Activated naive CD4-positive, alpha-beta T cell treated with anti-CD3 and anti-CD28 coated beads for 36 hours (primary cell): ENCODE measurements at regions of chr14 and their contacts with region 1.

Region 1: DNA sequence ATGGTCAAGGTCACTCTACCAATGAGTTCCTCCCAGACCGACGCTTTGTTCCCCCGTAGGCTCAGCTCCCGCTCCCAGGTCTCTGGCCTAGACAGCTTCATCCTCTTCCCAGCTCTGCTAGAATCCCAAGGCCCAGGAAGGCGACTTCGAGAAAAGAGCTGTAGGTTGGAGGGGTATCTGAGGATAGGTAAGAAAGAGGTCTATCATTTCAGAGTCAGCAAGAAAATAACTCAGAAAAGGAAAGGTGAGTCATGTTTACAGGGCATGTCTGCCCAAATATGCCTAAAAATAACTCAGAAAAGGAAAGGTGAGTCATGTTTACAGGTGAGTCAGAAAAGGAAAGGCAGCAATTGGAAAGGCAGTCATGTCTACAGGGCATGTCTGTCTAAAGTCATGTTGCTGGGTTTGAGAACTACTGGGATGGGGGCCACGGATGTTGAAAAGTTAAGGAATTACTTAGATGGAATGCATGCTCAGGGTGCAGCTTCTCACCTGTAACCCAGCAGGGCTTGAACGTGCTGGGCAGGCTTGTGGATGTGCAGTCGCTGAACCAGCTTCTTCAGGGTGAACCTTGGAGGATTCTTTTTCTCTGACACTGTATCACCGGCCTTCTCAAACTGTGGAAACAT is 12.2 kb downstream of the TEP1 start:
- DNase-seq: peak; percentile 43
- H3K4me3 Mint-ChIP-seq: peak overlapping the region; percentile 56
- H3K27ac Mint-ChIP-seq: peak overlapping the region; percentile 98
- H3K4me1 Mint-ChIP-seq: peaks cover 28% of the 10 kb centered on the region
- H3K27me3 Mint-ChIP-seq: no peaks in the 10 kb centered on the region

Region 2: DNA sequence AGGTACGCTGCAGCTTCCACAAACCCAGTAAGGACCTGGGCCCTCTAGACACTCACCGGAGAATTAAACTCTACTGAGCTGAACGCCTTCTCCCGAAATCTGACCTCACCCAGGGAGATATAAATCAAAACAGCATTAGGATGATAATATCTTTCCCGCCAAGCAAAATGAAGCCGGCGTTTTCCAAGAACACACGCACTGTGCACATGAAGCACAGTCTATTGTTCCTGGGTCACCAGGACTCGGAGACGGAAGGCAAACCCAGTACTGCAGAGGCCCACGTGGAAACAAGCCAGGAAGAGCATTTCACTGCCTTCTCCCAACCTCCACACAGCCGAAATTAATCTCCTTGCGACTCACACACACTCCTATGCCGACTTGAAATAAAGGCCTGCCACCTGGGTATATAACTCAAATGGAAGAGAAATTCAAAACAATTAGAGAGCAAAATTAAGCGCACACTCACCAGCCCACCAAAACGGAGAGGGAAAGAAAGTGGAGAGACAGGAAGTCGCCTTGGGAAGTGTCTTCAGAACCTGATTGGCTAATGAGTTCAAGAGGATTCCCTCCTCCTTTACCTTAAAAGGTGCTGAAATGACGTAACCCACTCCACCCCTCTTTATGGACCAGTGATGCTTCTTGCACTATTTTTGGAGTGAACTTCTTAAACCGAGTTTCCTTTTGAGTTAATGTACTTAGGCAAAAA is 68.1 kb before region 1 on chr14 and contains the start of gene CCNB1IP1:
- CTCF ChIA-PET with region 1: interaction called, 12 read pairs
- intact Hi-C with region 1: loop called (anchors 1 kb)
- DNase-seq: peak; percentile 71
- H3K4me3 Mint-ChIP-seq: peak within 1 kb of the TSS; percentile 90
- H3K27ac Mint-ChIP-seq: peak within 1 kb of the TSS; percentile 92
- H3K4me1 Mint-ChIP-seq: peaks cover 38% of the 10 kb centered on the region
- H3K27me3 Mint-ChIP-seq: no peaks in the 10 kb centered on the region
- total RNA-seq, gene CCNB1IP1: 93.4 to 98.6 TPM

Region 3: DNA sequence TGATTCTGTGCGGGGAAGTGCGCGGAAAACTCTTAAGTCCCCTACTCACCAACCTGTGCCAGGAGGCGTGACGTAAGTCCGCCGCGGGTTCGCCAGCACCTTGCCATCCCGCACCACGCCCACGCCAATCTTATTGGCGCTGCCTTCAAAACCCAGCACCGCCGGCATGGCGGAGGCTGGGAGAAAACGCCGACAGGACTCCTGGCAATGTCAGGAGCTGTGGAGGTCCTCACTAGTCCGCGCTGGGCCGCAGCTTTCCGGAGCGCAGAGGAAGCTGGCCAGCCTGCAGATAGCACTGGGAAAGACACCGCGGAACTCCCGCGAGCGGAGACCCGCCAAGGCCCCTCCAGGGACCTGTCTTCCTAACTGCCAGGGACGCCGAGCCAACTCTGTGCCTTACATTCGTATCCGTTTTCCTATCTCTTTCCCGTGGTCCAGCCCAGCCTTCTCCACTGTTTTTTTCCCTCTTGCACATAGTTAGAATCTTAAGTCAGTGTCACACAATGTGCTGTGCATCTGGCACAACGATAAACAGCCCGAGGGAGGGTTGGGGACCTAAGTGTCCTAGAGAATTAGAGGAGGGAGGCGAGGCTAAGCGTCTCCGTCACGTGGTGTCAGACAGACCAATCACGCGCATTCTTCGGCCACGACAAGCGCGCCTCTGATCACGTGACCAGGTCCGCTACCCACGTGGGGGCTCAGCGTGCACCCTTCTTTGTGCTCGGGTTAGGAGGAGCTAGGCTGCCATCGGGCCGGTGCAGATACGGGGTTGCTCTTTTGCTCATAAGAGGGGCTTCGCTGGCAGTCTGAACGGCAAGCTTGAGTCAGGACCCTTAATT is 53.7 kb after region 1 on chr14 and contains the starts of genes APEX1 and OSGEP:
- CTCF ChIA-PET with region 1: interaction called, 3 read pairs
- intact Hi-C with region 1: loop called (anchors 1 kb)
- DNase-seq: peak; percentile 99
- H3K4me3 Mint-ChIP-seq: peak within 1 kb of the TSS; percentile 52
- H3K27ac Mint-ChIP-seq: no peak within 1 kb of the TSS
- H3K4me1 Mint-ChIP-seq: peaks cover 31% of the 10 kb centered on the region
- H3K27me3 Mint-ChIP-seq: no peaks in the 10 kb centered on the region
- total RNA-seq, gene APEX1: 187 to 190 TPM
- total RNA-seq, gene OSGEP: 35.7 to 36.8 TPM

Region 4: GRCh38 chr14:20469242-20469889 is 68.3 kb after region 1 on chr14 and contains the start of gene PNP:
- CTCF ChIA-PET with region 1: no interaction called
- intact Hi-C with region 1: loop called (anchors 2 kb)
- DNase-seq: peak; percentile 91
- H3K4me3 Mint-ChIP-seq: peak within 1 kb of the TSS; percentile 88
- H3K27ac Mint-ChIP-seq: peak within 1 kb of the TSS; percentile 97
- H3K4me1 Mint-ChIP-seq: peaks cover 36% of the 10 kb centered on the region
- H3K27me3 Mint-ChIP-seq: no peaks in the 10 kb centered on the region
- total RNA-seq, gene PNP: 187 to 191 TPM